Calu3 (cell line): ENCODE measurements at regions of chr6 and their contacts with region 1.

Region 1: DNA sequence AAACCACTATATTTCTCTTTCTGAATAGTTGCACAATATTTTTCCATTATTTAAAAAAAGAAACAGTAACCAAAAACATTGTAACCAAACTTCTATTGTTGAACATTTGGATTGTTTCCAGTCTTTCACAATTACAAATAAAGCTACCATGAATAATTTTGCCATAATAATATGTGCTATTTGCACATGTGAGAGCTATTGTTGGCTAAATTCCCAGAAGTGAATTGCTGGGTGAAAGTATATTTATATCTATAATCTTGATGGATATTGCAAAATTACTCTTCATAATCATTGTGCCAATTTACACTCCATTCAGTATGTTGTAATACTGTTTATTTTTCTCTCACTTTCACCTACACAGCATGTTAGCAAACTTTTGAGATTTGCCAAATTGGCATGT is 36.6 kb upstream of the SLC22A16 start:
- DNase-seq: no peak
- H3K4me3 Mint-ChIP-seq: no peak overlapping the region
- H3K27ac Mint-ChIP-seq: no peak overlapping the region
- H3K4me1 Mint-ChIP-seq: peaks cover 60% of the 10 kb centered on the region
- H3K27me3 Mint-ChIP-seq: no peaks in the 10 kb centered on the region
- CTCF ChIP-seq: no peak

Region 2: DNA sequence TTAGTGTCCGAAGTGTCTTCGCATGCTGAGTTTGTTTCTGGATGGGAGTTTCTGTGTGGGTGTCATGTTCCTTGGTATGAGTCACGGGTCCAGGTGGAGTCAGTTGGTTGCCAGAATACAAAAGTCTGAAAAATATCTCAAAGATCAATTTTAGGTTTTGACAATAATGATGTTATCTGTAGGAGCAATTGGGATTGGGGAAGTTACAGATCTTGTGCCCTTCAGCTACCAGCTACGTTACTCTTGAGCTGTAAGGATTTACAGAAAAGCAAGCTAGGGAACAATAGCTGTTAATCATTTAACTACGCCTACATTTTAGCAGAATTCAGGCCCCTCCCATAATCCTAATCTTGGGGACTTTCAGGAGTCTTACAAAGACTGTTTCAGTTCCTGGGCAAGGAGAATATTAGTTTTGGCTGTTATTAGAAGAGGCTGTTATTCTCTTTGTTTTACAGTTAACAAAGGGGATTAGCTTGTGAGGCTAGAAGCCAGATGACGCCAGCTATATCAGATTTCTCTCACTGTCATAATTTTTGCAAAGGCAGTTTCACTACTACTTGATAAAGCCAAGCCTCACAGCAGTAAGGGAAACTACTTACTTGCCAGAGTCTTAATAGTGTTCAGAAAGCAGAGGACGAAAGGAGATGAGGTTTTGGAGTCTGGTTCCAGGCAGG is 21.2 kb before region 1 on chr6:
- CTCF ChIA-PET with region 1: no interaction called
- intact Hi-C with region 1: loop called (anchors 2 kb)
- DNase-seq: peak; percentile 52
- H3K4me3 Mint-ChIP-seq: peak overlapping the region; percentile 52
- H3K27ac Mint-ChIP-seq: peak overlapping the region; percentile 88
- H3K4me1 Mint-ChIP-seq: peaks cover 55% of the 10 kb centered on the region
- H3K27me3 Mint-ChIP-seq: no peaks in the 10 kb centered on the region
- CTCF ChIP-seq: no peak